ENCODE measurements at regions of chrX and their contacts with region 1.

Region 1: GRCh38 chrX:130139474-130140201 is 26.0 kb downstream of the AIFM1 start:
- DNase-seq: peak; percentile 29
- H3K4me3 ChIP-seq: no peak overlapping the region
- H3K27ac ChIP-seq: no peak overlapping the region
- H3K4me1 ChIP-seq: peaks cover 4% of the 10 kb centered on the region
- H3K27me3 ChIP-seq: no peaks in the 10 kb centered on the region
- CTCF ChIP-seq: no peak
- POLR2A ChIP-seq: no peak

Region 2: GRCh38 chrX:130186651-130187050 is 47.0 kb after region 1 on chrX:
- CTCF ChIA-PET with region 1: interaction called, 4 read pairs
- POLR2A ChIA-PET with region 1: no interaction called
- dilution Hi-C with region 1: no loop called
- intact Hi-C with region 1: loop called (anchors 5 kb)
- DNase-seq: no peak
- H3K4me3 ChIP-seq: no peak overlapping the region
- H3K27ac ChIP-seq: no peak overlapping the region
- H3K4me1 ChIP-seq: no peaks in the 10 kb centered on the region
- H3K27me3 ChIP-seq: no peaks in the 10 kb centered on the region
- CTCF ChIP-seq: no peak
- POLR2A ChIP-seq: no peak

Measured in endothelial cell of umbilical vein (primary cell).